ENCODE measurements at regions of chr13 and their contacts with region 1.

Region 1: GRCh38 chr13:20773194-20774080 is at the start of gene EEF1AKMT1:
- DNase-seq: peak; percentile 96
- H3K4me3 Mint-ChIP-seq: peak within 1 kb of the TSS; percentile 81
- H3K27ac Mint-ChIP-seq: peak within 1 kb of the TSS; percentile 96
- H3K4me1 Mint-ChIP-seq: peaks cover 42% of the 10 kb centered on the region
- H3K27me3 Mint-ChIP-seq: no peaks in the 10 kb centered on the region
- total RNA-seq, gene EEF1AKMT1: 16.5 to 18.4 TPM

Region 2: GRCh38 chr13:20073775-20074174 is 699.7 kb before region 1 on chr13:
- CTCF ChIA-PET with region 1: no interaction called
- POLR2A ChIA-PET with region 1: no interaction called
- intact Hi-C with region 1: no loop called
- DNase-seq: no peak
- H3K4me3 Mint-ChIP-seq: no peak overlapping the region
- H3K27ac Mint-ChIP-seq: no peak overlapping the region
- H3K4me1 Mint-ChIP-seq: peaks cover 12% of the 10 kb centered on the region
- H3K27me3 Mint-ChIP-seq: no peaks in the 10 kb centered on the region

Region 3: GRCh38 chr13:20525690-20526544 is 247.5 kb before region 1 on chr13 and contains the start of gene CRYL1:
- CTCF ChIA-PET with region 1: no interaction called
- POLR2A ChIA-PET with region 1: interaction called, 5 read pairs
- intact Hi-C with region 1: loop called (anchors 10 kb)
- DNase-seq: peak; percentile 77
- H3K4me3 Mint-ChIP-seq: peak within 1 kb of the TSS; percentile 84
- H3K27ac Mint-ChIP-seq: peak within 1 kb of the TSS; percentile 86
- H3K4me1 Mint-ChIP-seq: peaks cover 33% of the 10 kb centered on the region
- H3K27me3 Mint-ChIP-seq: peaks cover 5% of the 10 kb centered on the region
- total RNA-seq, gene CRYL1: 17.5 to 18.2 TPM

Region 4: DNA sequence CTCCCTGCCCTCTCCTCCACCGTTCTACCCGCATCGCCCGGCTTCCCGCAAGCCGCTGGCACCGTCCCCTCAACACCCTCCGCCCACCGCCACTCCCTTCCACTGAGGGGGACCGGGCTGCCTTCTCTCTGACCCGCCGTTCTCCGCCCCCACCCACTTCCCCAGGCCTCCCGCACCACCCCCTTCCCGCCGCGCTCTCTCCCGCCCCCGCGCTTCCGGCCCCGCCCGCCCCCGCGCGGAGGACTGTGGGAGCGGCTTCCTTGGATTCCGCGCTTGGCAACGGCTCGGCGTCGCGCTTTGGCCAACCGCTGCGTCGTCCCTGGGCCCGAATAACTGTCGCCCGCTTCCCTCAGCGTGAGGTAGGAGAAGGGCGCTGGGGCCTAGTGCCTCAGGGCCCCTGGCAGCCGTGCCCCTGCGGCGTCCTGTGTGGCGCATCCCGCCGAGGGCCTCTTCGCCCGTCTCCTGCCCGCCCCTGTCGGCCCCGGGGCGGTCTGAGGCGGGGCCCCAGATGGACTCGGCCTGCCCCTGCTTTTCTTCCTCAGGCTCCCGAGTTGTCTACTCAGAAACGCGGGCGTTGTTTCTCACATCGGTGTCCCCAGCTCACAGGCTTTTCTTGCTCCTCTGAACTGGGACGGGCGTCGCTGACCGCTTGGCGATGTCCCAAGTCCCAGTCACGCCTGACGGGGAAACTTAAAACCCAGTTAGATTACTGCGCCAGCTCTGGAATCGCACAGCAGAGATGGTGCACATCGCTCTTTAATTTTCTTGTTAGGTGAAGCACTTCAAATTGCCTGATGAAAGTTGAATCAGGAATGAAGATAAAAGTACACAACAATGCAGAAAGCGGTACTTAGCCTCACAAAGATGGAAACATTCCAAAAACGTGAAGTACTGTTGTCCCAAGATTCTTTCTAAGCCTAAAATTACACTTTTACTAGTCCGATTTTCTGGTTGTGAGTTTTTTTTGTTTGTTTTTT is 206.3 kb before region 1 on chr13 and contains the start of gene IFT88:
- CTCF ChIA-PET with region 1: no interaction called
- POLR2A ChIA-PET with region 1: no interaction called
- intact Hi-C with region 1: loop called (anchors 2 kb)
- DNase-seq: peak; percentile 88
- H3K4me3 Mint-ChIP-seq: peak within 1 kb of the TSS; percentile 84
- H3K27ac Mint-ChIP-seq: peak within 1 kb of the TSS; percentile 79
- H3K4me1 Mint-ChIP-seq: peaks cover 29% of the 10 kb centered on the region
- H3K27me3 Mint-ChIP-seq: no peaks in the 10 kb centered on the region
- total RNA-seq, gene IFT88: 4.7 to 5.3 TPM

Region 5: DNA sequence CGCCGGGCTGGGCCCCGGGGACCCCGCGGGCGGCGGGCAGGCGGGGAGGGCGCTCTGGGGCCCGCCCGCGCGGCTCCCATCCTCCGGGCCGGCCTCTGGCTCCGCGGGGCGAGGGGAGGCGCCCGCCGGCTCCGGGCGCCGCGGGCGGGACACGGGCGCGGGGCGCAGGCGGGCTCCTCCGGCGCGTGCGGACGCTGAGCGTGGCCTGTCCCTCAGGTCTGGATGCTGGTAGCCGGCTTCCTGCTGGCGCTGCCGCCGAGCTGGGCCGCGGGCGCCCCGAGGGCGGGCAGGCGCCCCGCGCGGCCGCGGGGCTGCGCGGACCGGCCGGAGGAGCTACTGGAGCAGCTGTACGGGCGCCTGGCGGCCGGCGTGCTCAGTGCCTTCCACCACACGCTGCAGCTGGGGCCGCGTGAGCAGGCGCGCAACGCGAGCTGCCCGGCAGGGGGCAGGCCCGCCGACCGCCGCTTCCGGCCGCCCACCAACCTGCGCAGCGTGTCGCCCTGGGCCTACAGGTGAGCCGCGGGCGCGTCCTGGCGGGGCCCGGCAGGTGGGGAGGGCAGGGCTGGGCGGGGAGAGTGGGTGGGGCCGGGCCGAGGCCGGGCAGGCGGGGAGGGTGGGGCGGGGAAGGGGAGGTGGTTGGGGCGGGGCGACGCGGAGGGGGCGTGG is 69.5 kb before region 1 on chr13:
- CTCF ChIA-PET with region 1: no interaction called
- POLR2A ChIA-PET with region 1: interaction called, 3 read pairs
- intact Hi-C with region 1: loop called (anchors 2 kb)
- DNase-seq: peak; percentile 82
- H3K4me3 Mint-ChIP-seq: no peak overlapping the region
- H3K27ac Mint-ChIP-seq: no peak overlapping the region
- H3K4me1 Mint-ChIP-seq: peaks cover 15% of the 10 kb centered on the region
- H3K27me3 Mint-ChIP-seq: peaks cover 17% of the 10 kb centered on the region

Region 6: DNA sequence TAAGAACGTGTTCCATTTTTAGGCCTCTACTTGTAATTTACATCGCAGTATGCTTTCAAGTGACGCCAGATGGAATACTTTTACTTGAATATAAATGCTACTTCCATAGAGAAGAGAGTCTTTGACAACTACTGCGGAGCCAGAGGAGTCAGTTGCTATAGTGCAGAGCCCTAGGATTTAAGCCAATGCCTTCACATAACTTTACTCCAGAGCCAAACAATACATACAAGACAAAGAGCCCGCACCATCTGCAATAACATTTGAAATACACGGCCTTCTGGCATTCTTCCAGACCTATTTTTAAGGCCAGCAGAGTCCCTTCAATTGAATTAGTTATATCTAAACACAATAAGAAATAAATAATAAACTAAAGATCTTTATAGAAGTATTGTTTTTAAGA is 69.7 kb after region 1 on chr13:
- CTCF ChIA-PET with region 1: no interaction called
- POLR2A ChIA-PET with region 1: no interaction called
- intact Hi-C with region 1: no loop called
- DNase-seq: no peak
- H3K4me3 Mint-ChIP-seq: no peak overlapping the region
- H3K27ac Mint-ChIP-seq: no peak overlapping the region
- H3K4me1 Mint-ChIP-seq: no peaks in the 10 kb centered on the region
- H3K27me3 Mint-ChIP-seq: no peaks in the 10 kb centered on the region

Region 7: DNA sequence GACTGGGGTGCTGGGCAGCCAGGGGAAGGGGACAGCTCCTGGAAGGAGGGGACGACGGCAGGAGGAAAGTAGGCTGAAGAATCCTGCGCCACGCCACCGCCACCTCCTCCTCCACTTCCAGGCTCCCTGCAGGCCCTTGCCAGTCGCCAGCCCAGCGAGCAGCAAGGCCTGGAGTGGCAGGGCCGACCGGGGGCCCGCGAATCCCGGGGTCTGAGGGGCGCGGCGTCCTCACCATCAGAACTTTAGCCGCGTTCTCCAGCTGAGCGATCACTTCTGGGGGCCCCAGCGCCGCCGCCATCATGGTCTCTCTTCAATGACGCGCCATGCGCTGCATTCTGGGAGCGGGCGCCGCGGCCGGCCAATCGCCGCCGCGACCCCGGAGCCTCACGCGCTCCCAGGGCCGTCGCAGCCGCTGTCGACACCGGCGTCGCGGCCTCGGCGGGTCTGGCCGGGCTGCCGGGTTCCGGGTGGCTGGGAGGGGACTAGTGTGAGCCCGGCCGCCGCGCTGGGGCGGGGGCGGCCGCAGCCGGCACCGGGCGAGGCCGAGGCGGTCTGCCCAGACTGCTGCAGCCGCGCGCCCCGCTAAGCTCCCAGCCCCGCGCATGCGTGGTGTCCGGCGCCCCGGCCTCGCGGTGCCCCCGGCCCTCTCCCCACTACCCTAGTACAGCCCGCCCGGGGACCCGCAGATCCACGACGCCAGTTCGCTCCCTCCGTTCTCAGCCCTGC is 129.2 kb after region 1 on chr13 and contains the start of gene XPO4:
- CTCF ChIA-PET with region 1: no interaction called
- POLR2A ChIA-PET with region 1: interaction called, 13 read pairs
- intact Hi-C with region 1: loop called (anchors 1 kb)
- DNase-seq: peak; percentile 87
- H3K4me3 Mint-ChIP-seq: peak within 1 kb of the TSS; percentile 95
- H3K27ac Mint-ChIP-seq: peak within 1 kb of the TSS; percentile 87
- H3K4me1 Mint-ChIP-seq: peaks cover 33% of the 10 kb centered on the region
- H3K27me3 Mint-ChIP-seq: no peaks in the 10 kb centered on the region
- total RNA-seq, gene XPO4: 24.8 to 25.1 TPM

Region 8: DNA sequence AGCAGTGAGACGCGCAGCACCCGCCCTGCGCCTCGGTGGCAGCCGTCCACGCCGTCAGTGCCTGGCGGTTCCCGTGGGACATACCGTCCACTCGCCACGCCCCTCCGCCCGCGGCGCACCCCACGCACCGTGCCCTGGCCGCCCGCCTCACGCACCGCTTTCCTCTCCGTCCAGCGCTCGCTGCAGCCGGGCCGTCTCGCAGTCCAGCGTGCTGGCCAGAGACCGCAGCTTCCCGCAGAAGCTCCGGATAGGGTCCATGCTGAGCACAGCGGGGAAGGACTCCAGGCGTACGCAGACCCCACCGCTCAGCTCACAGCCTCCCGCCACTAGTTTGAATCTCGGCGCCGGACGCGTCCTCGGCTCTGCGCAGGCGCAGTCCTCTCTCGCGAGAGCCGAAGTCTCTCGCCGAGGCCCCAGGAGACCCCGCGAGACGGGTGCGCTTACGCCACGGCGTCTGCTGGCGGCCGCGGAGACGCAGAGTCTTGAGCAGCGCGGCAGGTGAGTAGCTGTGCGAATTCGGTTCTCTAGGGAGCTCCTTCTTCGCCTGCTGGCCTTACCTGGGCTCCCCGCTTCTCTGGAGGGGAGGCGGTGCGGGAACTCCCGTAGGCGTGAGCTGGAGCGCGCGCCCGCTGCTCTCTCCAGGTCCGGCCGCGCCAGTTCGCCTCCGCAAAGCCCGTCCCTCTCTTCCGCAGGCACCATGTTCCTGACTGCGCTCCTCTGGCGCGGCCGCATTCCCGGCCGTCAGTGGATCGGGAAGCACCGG is 403.0 kb after region 1 on chr13 and contains the starts of genes MRPL57 and SKA3:
- CTCF ChIA-PET with region 1: no interaction called
- POLR2A ChIA-PET with region 1: interaction called, 4 read pairs
- intact Hi-C with region 1: loop called (anchors 10 kb)
- DNase-seq: peak; percentile 96
- H3K4me3 Mint-ChIP-seq: peak within 1 kb of the TSS; percentile 99
- H3K27ac Mint-ChIP-seq: peak within 1 kb of the TSS; percentile 96
- H3K4me1 Mint-ChIP-seq: peaks cover 18% of the 10 kb centered on the region
- H3K27me3 Mint-ChIP-seq: no peaks in the 10 kb centered on the region
- total RNA-seq, gene MRPL57: 20.8 to 23.1 TPM
- total RNA-seq, gene SKA3: 34.0 to 36.2 TPM

Measured in activated CD4-positive, alpha-beta memory T cell treated with anti-CD3 and anti-CD28 coated beads for 36 hours (primary cell).